ENCODE measurements at regions of chr19 and their contacts with region 1.

Region 1: DNA sequence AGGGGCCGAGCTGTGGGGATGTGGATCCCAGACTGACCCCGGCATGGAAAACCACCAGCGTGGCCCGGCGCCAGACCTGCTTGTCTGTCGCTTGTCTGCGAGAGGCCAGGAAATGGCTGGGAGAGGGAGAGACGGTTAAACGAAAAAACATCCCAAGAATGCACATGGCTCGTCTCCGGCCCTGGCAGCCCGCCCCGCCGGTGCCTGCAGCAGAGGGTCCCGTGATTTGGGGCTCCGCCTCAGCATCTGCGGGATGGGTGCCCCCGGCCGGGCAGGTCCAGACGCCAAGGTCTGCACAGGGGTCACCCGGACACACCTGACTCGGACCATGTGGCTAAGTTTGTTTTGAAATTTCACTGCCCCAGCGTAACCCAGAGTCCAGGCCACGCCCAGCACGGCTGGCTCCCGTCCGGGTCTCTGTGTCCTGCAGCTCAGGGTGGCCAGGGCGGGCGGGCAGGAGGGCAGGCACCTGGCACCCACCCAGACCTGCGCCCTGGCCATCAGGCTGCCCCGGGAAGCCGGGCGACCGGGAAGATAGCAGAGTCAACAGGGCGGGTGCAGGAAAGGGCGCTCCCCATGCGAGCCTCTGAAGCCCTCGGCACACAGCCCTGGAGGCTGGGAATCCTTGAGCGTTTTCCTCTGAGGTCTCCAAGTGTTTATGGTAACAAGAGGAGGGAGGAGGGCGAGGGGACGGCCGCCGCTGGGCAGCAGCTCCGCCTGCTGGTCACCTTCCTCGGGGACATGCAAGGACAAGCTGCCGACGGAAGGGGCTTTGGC is 103.2 kb downstream of the GADD45B start:
- DNase-seq: peak; percentile 69
- H3K4me3 ChIP-seq: peak overlapping the region; percentile 26 to 53 (median 50)
- H3K27ac ChIP-seq: no peak overlapping the region
- H3K4me1 ChIP-seq: peaks cover 20% of the 10 kb centered on the region
- H3K27me3 ChIP-seq: no peaks in the 10 kb centered on the region
- CTCF ChIP-seq: peak; percentile 62 to 87

Region 2: GRCh38 chr19:2491130-2491801 is 87.8 kb before region 1 on chr19:
- CTCF ChIA-PET with region 1: no interaction called
- dilution Hi-C with region 1: no loop called
- in situ Hi-C with region 1: no loop called
- intact Hi-C with region 1: loop called (anchors 1 kb)
- DNase-seq: peak; percentile 78
- H3K4me3 ChIP-seq: no peak overlapping the region
- H3K27ac ChIP-seq: peak overlapping the region; percentile 49
- H3K4me1 ChIP-seq: peaks cover 42% of the 10 kb centered on the region
- H3K27me3 ChIP-seq: no peaks in the 10 kb centered on the region
- CTCF ChIP-seq: no peak